ENCODE measurements at regions of chr14 and their contacts with region 1.

Region 1: DNA sequence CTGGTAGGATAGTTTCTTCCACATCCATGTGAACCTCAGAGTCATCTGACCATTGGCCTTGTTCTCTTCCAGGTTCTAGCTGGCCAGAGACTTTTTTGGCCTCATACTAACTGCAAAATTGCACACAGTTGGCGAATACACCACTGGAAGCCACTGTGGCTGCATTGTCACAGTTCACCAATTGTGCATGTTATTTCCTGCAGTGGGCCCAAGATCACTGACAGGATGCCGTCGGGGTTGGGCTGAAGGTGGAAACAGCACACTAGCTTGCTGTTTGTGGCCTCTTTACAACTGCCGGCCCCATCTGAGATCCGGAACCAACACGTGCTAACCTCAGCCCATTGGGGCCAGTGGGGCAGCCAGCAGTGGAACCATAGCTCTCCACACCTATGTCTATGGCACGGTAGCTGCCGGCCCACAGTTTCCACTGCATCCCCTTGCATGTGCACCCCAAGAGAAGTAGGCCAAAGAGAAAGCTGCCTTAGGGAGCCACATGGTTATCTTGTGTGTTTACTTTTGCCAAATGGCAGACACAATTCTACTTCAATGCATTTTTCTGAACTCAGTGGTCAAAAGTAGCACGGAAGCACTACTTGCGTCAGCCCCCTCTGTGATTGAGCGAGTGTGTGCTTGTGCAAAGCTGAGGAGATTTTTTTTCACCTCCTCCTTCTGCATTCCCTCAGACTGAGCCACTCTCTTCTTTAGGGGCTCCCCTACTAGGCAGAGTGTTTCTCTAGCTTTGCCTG is 464.0 kb downstream of the RAD51B start:
- DNase-seq: peak in 1 of 2 donors; percentile 72
- ATAC-seq: peak; percentile 53
- H3K4me3 ChIP-seq: no peak overlapping the region
- H3K27ac ChIP-seq: no peak overlapping the region
- H3K4me1 ChIP-seq: no peaks in the 10 kb centered on the region
- H3K27me3 ChIP-seq: no peaks in the 10 kb centered on the region

Region 2: DNA sequence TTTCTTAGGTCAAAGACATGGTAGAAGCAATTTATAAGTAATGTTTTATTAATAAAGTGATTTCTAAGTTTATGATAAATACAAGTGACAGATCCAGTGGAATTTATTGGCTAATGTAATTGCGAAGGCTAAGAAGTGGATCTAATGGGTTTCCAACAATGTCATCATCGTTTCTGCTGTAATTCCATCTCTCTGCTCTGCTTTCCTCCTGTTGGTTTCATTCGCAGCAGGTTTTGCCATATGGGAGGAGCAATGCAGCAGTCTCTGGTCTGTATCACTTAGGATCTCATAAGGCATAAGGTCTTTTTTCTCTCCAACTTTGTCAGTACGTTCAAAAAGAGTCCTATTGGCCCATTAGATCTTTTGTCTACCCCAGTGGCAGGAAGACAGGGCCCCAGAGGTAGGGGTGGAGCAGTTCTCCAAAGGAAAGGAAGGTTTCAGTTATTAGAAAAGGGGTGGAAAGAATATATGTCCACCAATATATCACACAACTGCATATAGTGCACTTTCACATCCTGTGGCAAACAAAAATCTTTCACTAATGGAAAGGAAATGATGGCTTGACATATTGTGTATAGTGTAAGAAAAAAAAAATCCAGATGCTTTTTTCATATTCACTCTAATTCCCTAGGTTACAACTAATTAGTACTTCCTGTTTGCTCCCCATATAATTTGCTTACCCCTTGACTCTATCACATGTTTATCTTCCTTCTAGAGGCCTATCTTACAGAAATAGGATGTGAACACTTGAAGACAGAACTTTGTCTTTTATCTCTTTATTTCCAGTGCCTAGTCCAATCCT is 58.1 kb after region 1 on chr14:
- intact Hi-C with region 1: loop called in 1 of 2 experiments (anchors 2 kb)
- DNase-seq: no peak
- ATAC-seq: no peak
- H3K4me3 ChIP-seq: no peak overlapping the region
- H3K27ac ChIP-seq: no peak overlapping the region
- H3K4me1 ChIP-seq: no peaks in the 10 kb centered on the region
- H3K27me3 ChIP-seq: no peaks in the 10 kb centered on the region